ENCODE measurements at regions of chr10 and their contacts with region 1.

Region 1: GRCh38 chr10:124565565-124566256 is 104.1 kb downstream of the LHPP start:
- DNase-seq: peak in 3 of 5 donors; percentile 52 to 72 (median 60)
- ATAC-seq: peak; percentile 16 to 60 (median 53)
- H3K4me3 ChIP-seq: no peak overlapping the region
- H3K27ac ChIP-seq: peak overlapping the region in 1 of 12 donors; percentile 25
- H3K4me1 ChIP-seq: peaks cover 5 to 22% (median 13%) of the 10 kb centered on the region in 12 donors
- H3K27me3 ChIP-seq: no peaks in the 10 kb centered on the region
- CTCF ChIP-seq: peak; percentile 18 to 49 (median 32)
- POLR2A ChIP-seq: no peak

Region 2: GRCh38 chr10:124436191-124436638 is 129.5 kb before region 1 on chr10:
- intact Hi-C with region 1: no loop called
- DNase-seq: no peak
- ATAC-seq: no peak
- H3K4me3 ChIP-seq: no peak overlapping the region
- H3K27ac ChIP-seq: no peak overlapping the region
- H3K4me1 ChIP-seq: no peaks in the 10 kb centered on the region
- H3K27me3 ChIP-seq: peaks cover 0 to under 1% (median 0%) of the 10 kb centered on the region in 9 donors
- CTCF ChIP-seq: no peak
- POLR2A ChIP-seq: no peak

Region 3: DNA sequence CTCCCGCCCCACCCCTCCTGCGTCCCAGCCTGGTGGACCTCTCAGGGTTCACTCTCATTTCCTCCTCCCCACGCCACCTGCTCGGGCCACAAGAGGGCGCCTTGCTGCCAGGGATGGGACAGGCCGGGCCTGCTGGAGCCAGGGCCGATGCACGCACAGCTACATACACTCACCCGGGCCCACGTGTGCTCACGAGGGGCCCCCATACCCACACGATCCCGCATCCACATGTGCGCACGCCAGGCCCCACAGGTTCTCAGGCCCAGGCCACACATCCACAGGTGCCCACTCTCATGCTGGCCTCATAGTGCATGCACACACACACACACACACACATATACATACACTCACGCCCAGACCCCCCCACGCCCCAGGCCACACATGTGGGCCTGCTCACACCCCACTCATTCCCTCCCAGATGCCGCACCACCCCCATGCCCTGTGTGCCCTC is 35.5 kb before region 1 on chr10:
- intact Hi-C with region 1: no loop called
- DNase-seq: peak; percentile 84 to 94 (median 88)
- ATAC-seq: peak; percentile 68 to 87 (median 84)
- H3K4me3 ChIP-seq: no peak overlapping the region
- H3K27ac ChIP-seq: no peak overlapping the region
- H3K4me1 ChIP-seq: peaks cover 0 to 18% (median 5%) of the 10 kb centered on the region in 12 donors
- H3K27me3 ChIP-seq: no peaks in the 10 kb centered on the region
- CTCF ChIP-seq: peak; percentile 82 to 91 (median 87)
- POLR2A ChIP-seq: no peak

Region 4: GRCh38 chr10:124612611-124613498 is 47.1 kb after region 1 on chr10:
- intact Hi-C with region 1: loop called in 2 of 10 experiments (anchors 5 to 10 kb)
- DNase-seq: peak in 1 of 5 donors; percentile 55
- ATAC-seq: peak in 3 of 4 donors; percentile 52 to 62 (median 54)
- H3K4me3 ChIP-seq: no peak overlapping the region
- H3K27ac ChIP-seq: peak overlapping the region in 6 of 12 donors; percentile 14 to 69 (median 44)
- H3K4me1 ChIP-seq: peaks cover 0 to 36% (median 12%) of the 10 kb centered on the region in 12 donors
- H3K27me3 ChIP-seq: no peaks in the 10 kb centered on the region
- CTCF ChIP-seq: no peak
- POLR2A ChIP-seq: no peak

Region 5: DNA sequence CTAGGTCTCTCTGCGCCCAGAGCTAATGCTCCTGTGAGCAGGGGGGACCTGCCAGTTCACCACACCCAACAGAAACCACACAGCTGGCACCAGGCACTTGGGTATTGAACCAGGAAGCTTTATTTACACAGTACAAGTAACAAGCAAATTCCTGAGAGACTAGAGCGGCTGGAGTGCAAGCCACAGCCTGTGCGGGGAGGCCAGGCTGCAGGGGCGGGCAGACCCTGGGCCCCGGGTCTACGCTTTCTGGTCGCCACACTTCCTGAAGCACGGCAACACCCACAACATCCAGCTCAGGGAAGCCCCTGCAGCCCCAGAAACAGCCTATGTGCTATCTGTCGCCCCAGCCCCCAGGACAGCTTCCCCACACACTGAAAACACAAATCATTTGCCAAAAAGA is 53.5 kb after region 1 on chr10:
- intact Hi-C with region 1: loop called in 4 of 10 experiments (anchors 5 to 10 kb)
- DNase-seq: no peak
- ATAC-seq: no peak
- H3K4me3 ChIP-seq: no peak overlapping the region
- H3K27ac ChIP-seq: no peak overlapping the region
- H3K4me1 ChIP-seq: peaks cover 0 to 71% (median 32%) of the 10 kb centered on the region in 12 donors
- H3K27me3 ChIP-seq: no peaks in the 10 kb centered on the region
- CTCF ChIP-seq: no peak
- POLR2A ChIP-seq: no peak

Region 6: GRCh38 chr10:124626759-124627380 is 61.2 kb after region 1 on chr10:
- intact Hi-C with region 1: loop called in 3 of 10 experiments (anchors 2 to 10 kb)
- DNase-seq: no peak
- ATAC-seq: no peak
- H3K4me3 ChIP-seq: no peak overlapping the region
- H3K27ac ChIP-seq: peak overlapping the region in 5 of 12 donors; percentile 38 to 74 (median 69)
- H3K4me1 ChIP-seq: peaks cover 7 to 99% (median 87%) of the 10 kb centered on the region in 12 donors
- H3K27me3 ChIP-seq: no peaks in the 10 kb centered on the region
- CTCF ChIP-seq: no peak
- POLR2A ChIP-seq: no peak

Region 7: GRCh38 chr10:124827474-124827873 is 261.8 kb after region 1 on chr10:
- intact Hi-C with region 1: no loop called
- DNase-seq: no peak
- ATAC-seq: no peak
- H3K4me3 ChIP-seq: no peak overlapping the region
- H3K27ac ChIP-seq: no peak overlapping the region
- H3K4me1 ChIP-seq: no peaks in the 10 kb centered on the region
- H3K27me3 ChIP-seq: no peaks in the 10 kb centered on the region
- CTCF ChIP-seq: peak; percentile 42 to 71 (median 54)
- POLR2A ChIP-seq: no peak